Posterior vena cava (tissue), 2 donors: ENCODE measurements at regions of chr14 and their contacts with region 1.

Region 1: DNA sequence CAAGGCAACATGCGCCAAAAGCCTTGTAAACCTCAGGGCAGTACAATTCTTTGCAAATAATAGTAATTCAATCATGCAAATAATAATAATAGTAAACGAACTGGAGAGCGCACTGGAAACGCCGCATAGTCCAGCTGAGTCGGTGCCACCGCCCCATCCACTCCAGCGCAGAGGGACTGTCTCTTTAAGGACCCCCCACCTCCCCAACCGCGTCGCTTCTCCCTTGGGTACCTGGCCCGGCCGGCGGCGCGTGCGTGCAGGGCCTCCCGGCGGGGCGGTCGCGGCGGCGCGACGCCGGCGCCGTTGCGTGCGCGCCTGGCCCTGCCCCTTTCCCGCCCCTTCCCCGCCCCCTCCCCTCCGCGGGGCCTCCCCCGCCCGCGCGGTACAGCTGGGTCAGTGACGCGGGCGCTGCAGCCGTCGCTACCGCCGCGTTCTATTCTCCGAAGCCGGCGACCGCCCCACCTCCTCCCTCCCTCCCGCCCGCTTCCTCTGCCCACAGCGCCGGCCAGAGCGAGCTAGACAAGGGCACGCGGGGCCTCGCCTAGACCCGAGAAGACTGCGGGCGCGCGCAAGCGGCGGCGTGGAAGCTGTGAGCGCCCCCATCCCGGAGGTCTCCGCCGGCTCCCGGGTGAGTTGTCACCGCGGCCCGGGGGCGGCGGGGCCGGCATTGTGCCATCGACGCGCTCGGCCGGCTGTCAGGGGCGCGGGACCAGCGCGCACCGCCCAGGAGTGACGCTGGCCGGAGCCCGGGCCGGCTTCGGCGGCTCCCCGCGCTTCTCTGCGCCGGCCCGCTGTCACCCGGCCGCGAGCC is at the start of gene SUSD6:
- DNase-seq: peak; percentile 98
- total RNA-seq, gene SUSD6: 35.1 to 43.8 TPM

Region 2: DNA sequence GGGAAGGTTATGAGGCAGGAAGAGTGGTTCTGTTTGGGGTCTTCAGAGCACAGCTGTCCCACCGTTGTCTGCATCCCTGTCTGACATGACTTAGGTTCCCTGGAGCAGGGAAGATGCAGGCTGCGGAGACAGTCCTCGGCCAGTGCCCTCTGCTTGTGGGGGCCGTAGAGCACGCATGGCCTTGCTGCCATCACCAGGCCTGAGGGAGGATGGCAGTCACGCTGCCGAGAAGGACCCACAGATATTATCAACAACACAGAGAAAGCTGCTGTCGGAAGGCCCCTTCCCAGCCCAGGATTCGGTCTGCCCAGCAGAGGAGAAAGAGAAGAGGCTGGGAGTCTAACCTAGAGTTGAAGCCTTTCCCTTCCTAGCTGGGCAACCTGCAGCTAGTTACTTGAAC is 248.4 kb before region 1 on chr14:
- intact Hi-C with region 1: no loop called
- DNase-seq: peak; percentile 85

Region 3: GRCh38 chr14:69574263-69574953 is 37.0 kb before region 1 on chr14 and contains the start of gene CCDC177:
- intact Hi-C with region 1: no loop called
- DNase-seq: peak; percentile 85
- total RNA-seq, gene CCDC177: not detected

Region 4: GRCh38 chr14:69635981-69636639 is 24.7 kb after region 1 on chr14:
- intact Hi-C with region 1: loop called in 1 of 2 experiments (anchors 1 kb)
- DNase-seq: no peak

Region 5: DNA sequence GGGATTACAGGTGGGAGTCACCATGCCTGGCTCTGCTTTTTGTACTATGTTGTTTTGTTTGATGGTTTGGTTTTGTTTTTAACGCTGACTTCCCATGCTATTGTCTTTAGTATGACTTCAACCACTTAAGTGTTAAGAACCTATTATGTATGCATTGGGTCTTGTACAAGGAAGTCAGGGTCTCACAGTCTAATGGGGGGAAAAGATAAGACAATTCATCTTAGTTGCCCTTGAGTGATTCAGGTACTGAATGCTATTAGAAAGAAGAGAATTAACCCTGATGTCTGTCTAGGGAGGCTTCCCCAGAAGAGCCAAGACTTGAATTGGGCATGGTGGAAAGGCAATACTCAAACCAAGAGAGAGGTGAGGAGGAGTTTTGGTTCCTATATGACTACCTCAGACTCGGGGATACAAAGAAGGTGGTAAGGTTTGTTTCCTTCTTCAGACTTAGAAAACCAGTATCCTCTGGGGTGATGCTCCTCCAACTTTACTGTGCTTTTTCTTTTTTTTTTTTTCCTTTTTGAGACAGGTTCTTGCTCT is 64.5 kb after region 1 on chr14:
- intact Hi-C with region 1: loop called in 1 of 2 experiments (anchors 5 kb)
- DNase-seq: no peak

Region 6: DNA sequence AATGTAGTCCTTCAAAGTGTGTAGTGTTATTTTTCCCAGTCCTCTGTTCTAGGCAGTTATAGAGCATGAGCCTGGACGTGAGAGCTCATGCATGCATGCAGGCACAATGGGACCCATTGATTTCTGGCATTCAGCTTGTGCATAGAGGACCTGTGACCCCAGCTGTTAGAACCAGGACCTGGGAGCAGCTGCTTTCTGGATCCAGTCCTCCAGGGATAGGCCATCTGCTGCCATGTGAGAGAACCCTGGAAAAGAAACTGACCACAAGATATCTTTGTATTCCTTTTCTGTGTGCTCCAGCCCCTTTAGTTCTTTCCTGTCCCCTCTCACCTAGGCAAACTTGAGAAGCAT is 76.9 kb after region 1 on chr14:
- intact Hi-C with region 1: no loop called
- DNase-seq: peak; percentile 15